K562 (cell line): ENCODE measurements at regions of chr1 and their contacts with region 1.

Region 1: DNA sequence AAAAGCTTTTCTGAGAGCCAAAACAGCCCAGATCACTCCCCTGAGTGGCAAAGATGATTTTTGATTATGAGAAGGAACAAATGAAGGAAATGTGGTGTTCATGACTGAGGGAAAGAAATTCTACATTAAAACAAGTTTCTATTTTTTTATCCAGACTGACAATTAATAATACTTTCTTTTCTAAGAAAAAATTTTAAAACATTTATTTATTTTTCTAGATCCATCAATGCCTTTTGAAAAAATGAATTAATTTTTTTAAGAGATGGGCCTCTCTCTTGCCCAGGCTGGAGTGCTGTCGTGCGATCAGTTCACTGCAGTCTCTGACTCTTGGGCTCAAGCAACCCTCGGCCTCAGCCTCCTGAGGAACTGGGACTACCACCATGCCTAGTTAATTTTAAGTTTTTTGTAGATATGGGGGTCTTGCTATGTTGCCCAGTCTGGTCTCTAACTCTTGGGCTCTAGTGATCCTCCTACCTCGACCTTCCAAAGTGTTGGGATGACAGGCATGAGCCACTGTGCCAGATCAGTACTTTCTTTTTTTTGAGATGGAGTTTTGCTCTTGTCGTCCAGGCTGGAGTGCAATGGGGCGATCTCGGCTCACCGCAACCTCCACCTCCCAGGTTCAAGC is 11.2 kb upstream of the TXNIP start:
- DNase-seq: no peak
- ATAC-seq: no peak
- H3K4me3 ChIP-seq: no peak overlapping the region
- H3K27ac ChIP-seq: peak overlapping the region; percentile 94; the same call in 2 of the 3 replicates
- H3K4me1 ChIP-seq: peaks cover 11 to 14% of the 10 kb centered on the region in 2 experiments
- H3K27me3 ChIP-seq: no peaks in the 10 kb centered on the region
- CTCF ChIP-seq: no peak
- EP300 ChIP-seq: no peak
- POLR2A ChIP-seq: no peak
- RAD21 ChIP-seq: no peak

Region 2: GRCh38 chr1:145804235-145805045 is 203.2 kb before region 1 on chr1:
- CTCF ChIA-PET with region 1: no interaction called
- POLR2A ChIA-PET with region 1: no interaction called
- in situ Hi-C with region 1: no loop called
- intact Hi-C with region 1: no loop called
- DNase-seq: no peak
- ATAC-seq: no peak; the same call in 2 of the 3 replicates
- H3K4me3 ChIP-seq: no peak overlapping the region
- H3K27ac ChIP-seq: no peak overlapping the region
- H3K4me1 ChIP-seq: no peaks in the 10 kb centered on the region; a peak in 1 of 5 replicates
- H3K27me3 ChIP-seq: no peaks in the 10 kb centered on the region
- CTCF ChIP-seq: no peak
- EP300 ChIP-seq: no peak
- POLR2A ChIP-seq: no peak
- RAD21 ChIP-seq: no peak

Region 3: GRCh38 chr1:145996433-145997015 is 11.1 kb before region 1 on chr1 and contains the start of gene TXNIP:
- CTCF ChIA-PET with region 1: interaction called, 4 read pairs
- POLR2A ChIA-PET with region 1: interaction called, 25 read pairs
- in situ Hi-C with region 1: no loop called
- intact Hi-C with region 1: loop called (anchors 1 kb)
- DNase-seq: peak; percentile 99 to 100 (median 100)
- ATAC-seq: peak; percentile 71
- H3K4me3 ChIP-seq: peak within 1 kb of the TSS; percentile 85
- H3K27ac ChIP-seq: peak within 1 kb of the TSS; percentile 99
- H3K4me1 ChIP-seq: peaks cover 14 to 31% of the 10 kb centered on the region in 2 experiments; a peak in 3 of 5 replicates
- H3K27me3 ChIP-seq: no peaks in the 10 kb centered on the region
- CTCF ChIP-seq: peak in 1 of 3 experiments; percentile 4; a peak in 1 of 6 replicates
- EP300 ChIP-seq: peak; percentile 91
- POLR2A ChIP-seq: peak; percentile 100
- RAD21 ChIP-seq: no peak
- polyA plus RNA-seq, gene TXNIP: 120 to 237 TPM

Region 4: DNA sequence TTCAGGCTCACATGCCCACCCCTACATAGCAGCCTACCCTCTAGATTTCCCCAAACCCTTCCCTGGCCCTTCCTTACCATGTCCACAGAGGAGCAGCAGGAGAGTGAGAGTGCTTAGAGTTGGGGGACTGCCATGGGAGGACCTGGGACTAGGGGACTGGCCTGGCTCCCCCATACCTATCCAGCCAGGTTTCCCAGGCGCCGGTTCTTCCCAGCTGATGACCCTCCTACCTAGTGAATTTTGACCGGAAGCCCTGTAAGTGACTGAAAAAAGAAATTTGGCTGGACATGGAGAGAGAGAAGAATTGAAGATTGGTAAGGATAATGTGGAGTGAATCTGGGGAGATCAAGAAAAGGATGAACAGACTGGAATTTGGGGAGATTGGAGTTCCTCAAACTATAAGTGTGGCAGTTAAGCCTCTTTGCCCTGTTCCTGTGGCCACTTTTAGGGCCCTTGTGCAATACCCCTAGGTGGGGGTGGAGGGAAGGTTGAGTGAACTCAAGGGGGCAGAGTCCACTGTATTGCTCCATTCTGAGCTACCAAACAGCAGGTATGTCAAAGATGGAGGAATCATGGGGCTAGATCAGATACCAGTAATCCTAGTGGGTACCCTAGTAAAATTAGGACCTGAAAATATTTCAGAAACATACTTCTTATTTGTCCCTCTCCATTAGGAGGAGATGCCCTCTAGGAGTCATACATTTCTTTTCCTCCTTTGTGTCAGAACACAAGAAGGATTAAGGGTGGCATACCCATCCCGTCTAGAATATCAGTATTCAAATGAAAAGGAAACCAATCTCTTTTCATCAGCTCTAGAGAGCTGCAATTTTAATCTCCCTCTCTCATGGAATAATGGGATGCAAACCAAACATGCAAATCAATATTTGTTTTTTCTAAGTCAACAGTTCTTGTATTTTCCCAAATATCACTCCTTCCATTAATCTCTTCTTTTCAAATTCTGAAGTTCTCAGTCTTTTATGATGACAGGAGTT is 12.7 kb after region 1 on chr1:
- CTCF ChIA-PET with region 1: no interaction called
- POLR2A ChIA-PET with region 1: interaction called, 10 read pairs
- in situ Hi-C with region 1: no loop called
- intact Hi-C with region 1: no loop called
- DNase-seq: no peak
- ATAC-seq: peak; percentile 34; the same call in 2 of the 3 replicates
- H3K4me3 ChIP-seq: peak overlapping the region; percentile 22; the same call in 1 of the 2 replicates
- H3K27ac ChIP-seq: peak overlapping the region; percentile 80; the same call in 1 of the 3 replicates
- H3K4me1 ChIP-seq: peaks cover 9 to 30% of the 10 kb centered on the region in 2 experiments
- H3K27me3 ChIP-seq: no peaks in the 10 kb centered on the region
- CTCF ChIP-seq: peak in 2 of 3 experiments; percentile 20 to 21; a peak in 2 of 6 replicates
- EP300 ChIP-seq: no peak
- POLR2A ChIP-seq: no peak
- RAD21 ChIP-seq: no peak